Activated CD8-positive, alpha-beta T cell treated with anti-CD3 and anti-CD28 coated beads for 36 hours (primary cell): ENCODE measurements at regions of chr3 and their contacts with region 1.

Region 1: DNA sequence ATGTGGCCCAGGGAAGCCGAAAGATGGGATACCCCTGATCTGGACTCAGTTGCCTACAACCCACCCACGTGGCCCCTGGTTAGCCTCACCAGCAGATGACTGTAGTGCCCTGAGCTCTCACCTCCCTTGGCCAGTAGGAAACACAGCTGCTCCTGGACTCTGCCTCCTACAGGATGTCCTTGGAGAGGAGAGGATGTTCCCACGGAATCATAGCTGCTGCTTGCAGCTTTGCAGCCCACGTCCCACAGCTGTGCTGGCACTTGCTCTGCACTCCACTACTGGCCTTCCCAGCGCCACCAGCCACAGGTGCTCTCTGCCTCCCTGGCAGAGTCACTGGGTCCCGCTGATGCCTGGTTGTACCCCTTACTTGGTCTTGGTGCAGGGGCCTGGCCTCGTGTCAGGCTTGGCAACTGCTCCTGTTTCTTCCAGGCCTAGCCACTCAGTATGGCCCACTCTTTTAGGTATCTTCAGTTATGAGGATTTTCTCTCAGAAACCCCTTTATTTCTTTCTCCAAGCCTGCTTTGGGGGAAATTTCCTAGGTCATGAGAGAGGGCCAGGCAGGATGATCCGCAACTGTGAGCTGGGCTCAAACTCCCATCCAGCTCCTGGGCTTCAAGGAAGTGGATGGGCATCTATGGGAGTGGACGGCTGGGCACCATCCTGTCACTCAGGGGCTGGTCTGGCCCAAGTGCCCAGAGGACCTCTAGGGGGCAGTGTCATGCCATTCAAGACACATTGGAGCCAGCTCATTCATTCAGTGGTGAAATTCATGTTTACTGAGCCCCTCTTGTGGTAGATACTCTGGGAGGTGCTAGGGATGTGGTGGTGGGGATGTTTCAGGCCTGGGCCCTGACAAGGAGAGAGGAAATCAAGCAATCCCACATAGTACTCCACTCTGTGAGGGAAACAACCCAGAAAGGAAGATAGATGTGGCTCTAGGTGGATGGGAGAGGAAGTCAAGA is 16.2 kb upstream of the VILL start:
- DNase-seq: peak; percentile 83
- ATAC-seq: peak; percentile 98
- H3K4me3 Mint-ChIP-seq: no peak overlapping the region
- H3K27ac Mint-ChIP-seq: no peak overlapping the region
- H3K4me1 Mint-ChIP-seq: peaks cover 4% of the 10 kb centered on the region
- H3K27me3 Mint-ChIP-seq: no peaks in the 10 kb centered on the region
- CTCF ChIP-seq: peak; percentile 83

Region 2: GRCh38 chr3:37986479-37987314 is 12.3 kb after region 1 on chr3:
- CTCF ChIA-PET with region 1: interaction called, 23 read pairs
- POLR2A ChIA-PET with region 1: interaction called, 3 read pairs
- intact Hi-C with region 1: no loop called
- DNase-seq: no peak
- ATAC-seq: no peak
- H3K4me3 Mint-ChIP-seq: no peak overlapping the region
- H3K27ac Mint-ChIP-seq: no peak overlapping the region
- H3K4me1 Mint-ChIP-seq: peaks cover 3% of the 10 kb centered on the region
- H3K27me3 Mint-ChIP-seq: no peaks in the 10 kb centered on the region
- CTCF ChIP-seq: no peak

Region 3: DNA sequence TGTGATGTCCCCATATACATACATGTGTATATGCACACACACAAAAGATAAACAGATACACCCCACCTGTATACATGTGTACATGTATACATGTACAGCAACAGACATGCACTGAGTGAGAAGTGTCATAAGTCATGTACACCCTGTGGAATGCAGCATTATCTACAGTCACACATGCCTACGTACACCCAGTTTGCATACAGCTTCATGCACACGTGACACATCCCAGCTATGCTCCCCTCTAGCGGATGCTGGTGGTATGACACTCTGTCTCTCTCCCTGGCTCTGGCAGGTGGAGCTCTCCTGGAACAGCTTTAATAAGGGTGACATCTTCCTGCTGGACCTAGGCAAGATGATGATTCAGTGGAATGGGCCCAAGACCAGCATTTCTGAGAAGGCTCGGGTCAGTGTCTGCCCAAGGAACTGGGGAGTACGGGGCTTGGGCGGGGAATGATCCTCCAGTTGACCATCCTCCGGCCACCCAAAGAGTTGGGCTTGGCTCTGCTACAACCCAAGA is 22.4 kb after region 1 on chr3:
- CTCF ChIA-PET with region 1: interaction called, 35 read pairs
- POLR2A ChIA-PET with region 1: interaction called, 3 read pairs
- intact Hi-C with region 1: no loop called
- DNase-seq: peak; percentile 93
- ATAC-seq: peak; percentile 71
- H3K4me3 Mint-ChIP-seq: no peak overlapping the region
- H3K27ac Mint-ChIP-seq: peak overlapping the region; percentile 95
- H3K4me1 Mint-ChIP-seq: peaks cover 51% of the 10 kb centered on the region
- H3K27me3 Mint-ChIP-seq: no peaks in the 10 kb centered on the region
- CTCF ChIP-seq: peak; percentile 96

Region 4: DNA sequence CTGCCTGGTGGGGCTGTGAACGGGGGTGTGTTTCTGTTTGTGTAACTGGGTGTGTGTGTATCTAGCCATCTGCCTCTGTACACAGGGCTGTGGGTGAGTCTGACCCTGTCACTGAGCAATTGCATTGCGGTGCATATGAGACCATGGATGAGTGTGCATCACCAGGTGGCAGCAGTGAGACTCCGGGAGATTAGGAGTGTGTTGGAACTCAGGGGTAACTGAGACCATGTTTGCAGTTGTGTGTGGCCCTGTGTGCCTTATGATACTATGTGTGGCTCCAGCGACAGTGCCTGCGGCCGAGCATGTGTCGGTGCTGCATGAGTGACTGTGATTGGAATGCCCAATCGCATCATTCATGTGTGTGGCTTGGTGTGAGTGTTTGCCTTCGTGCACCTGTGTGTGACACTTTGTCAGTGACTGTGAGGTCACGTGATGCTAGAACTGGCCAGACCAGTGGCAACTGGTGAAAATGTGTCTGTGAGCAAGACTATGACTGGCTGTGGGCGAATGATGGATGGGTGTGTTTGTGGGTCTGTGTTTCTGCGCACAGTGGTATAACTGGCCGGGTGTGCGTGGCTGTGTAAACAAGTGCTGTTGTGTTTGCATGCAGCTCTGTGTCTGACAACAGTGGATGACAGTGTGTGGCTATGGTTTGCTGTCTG is 30.1 kb after region 1 on chr3:
- CTCF ChIA-PET with region 1: interaction called, 35 read pairs
- POLR2A ChIA-PET with region 1: interaction called, 3 read pairs
- intact Hi-C with region 1: no loop called
- DNase-seq: peak; percentile 78
- ATAC-seq: peak; percentile 54
- H3K4me3 Mint-ChIP-seq: no peak overlapping the region
- H3K27ac Mint-ChIP-seq: peak overlapping the region; percentile 46
- H3K4me1 Mint-ChIP-seq: peaks cover 17% of the 10 kb centered on the region
- H3K27me3 Mint-ChIP-seq: no peaks in the 10 kb centered on the region
- CTCF ChIP-seq: peak; percentile 49

Region 5: DNA sequence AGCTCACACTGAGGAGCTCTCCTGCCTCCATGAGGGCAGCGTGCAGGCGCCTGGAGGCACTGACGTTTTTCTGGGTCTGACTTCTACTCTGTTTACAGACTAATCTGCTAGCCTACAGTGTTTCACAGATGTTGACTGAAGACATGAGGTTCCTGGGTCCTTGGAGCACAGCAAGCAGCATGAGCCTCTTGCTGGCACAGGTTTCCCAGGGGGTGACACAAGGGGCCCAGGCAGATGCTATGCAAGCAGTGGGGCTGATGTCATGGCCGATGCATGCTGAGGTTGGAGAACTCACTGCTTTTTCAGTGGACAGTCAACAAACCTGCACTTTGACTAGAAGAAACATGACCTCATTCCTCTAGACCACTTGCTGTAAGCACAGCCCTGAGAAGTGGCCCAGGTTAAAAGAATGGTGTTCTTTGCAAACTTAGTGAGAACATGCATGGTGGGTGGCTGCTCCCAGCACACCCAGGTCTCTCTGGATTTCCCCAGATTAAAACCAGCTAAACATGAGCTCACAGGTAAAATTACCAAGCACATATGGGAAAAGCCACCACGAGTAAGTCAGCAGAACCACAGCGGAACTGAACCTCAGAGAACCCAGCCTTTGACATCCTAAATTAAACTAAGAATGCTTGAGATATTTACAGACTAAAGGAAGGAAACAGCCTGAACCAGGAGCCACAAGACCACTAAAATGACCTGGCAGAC is 80.0 kb after region 1 on chr3:
- CTCF ChIA-PET with region 1: no interaction called
- POLR2A ChIA-PET with region 1: no interaction called
- intact Hi-C with region 1: no loop called
- DNase-seq: no peak
- ATAC-seq: peak; percentile 42
- H3K4me3 Mint-ChIP-seq: no peak overlapping the region
- H3K27ac Mint-ChIP-seq: no peak overlapping the region
- H3K4me1 Mint-ChIP-seq: peaks cover 5% of the 10 kb centered on the region
- H3K27me3 Mint-ChIP-seq: no peaks in the 10 kb centered on the region
- CTCF ChIP-seq: no peak

Region 6: GRCh38 chr3:38107911-38108648 is 133.7 kb after region 1 on chr3:
- CTCF ChIA-PET with region 1: interaction called, 10 read pairs
- POLR2A ChIA-PET with region 1: no interaction called
- intact Hi-C with region 1: no loop called
- DNase-seq: no peak
- ATAC-seq: no peak
- H3K4me3 Mint-ChIP-seq: no peak overlapping the region
- H3K27ac Mint-ChIP-seq: no peak overlapping the region
- H3K4me1 Mint-ChIP-seq: no peaks in the 10 kb centered on the region
- H3K27me3 Mint-ChIP-seq: no peaks in the 10 kb centered on the region
- CTCF ChIP-seq: no peak